Mammary epithelial cell (primary cell): ENCODE measurements at regions of chr5 and their contacts with region 1.

Region 1: GRCh38 chr5:44774279-44774880 is 34.4 kb upstream of the MRPS30 start:
- DNase-seq: peak; percentile 27
- H3K4me3 ChIP-seq: no peak overlapping the region
- H3K27ac ChIP-seq: no peak overlapping the region
- H3K4me1 ChIP-seq: no peaks in the 10 kb centered on the region
- H3K27me3 ChIP-seq: no peaks in the 10 kb centered on the region
- CTCF ChIP-seq: peak; percentile 32 to 58

Region 2: DNA sequence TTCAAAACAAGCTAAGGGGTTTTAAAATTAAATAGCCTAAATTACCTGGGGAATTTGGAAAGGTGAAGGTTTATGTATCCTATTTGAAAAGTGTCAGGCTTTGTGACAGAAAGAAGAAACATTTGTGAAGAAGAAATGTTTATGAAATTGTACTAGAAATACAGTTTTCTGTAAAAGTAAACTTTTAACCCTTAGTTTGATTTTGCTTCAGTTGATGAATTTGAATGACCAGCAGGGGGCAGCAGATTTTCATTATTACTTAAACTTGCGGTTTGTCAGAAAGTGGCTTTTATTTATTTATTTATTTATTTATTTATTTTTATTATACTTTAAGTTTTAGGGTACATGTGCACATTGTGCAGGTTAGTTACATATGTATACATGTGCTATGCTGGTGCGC is 1113.3 kb before region 1 on chr5:
- CTCF ChIA-PET with region 1: no interaction called
- dilution Hi-C with region 1: no loop called
- in situ Hi-C with region 1: no loop called
- intact Hi-C with region 1: loop called (anchors 10 kb)
- DNase-seq: peak; percentile 5
- H3K4me3 ChIP-seq: no peak overlapping the region
- H3K27ac ChIP-seq: no peak overlapping the region
- H3K4me1 ChIP-seq: peaks cover 4% of the 10 kb centered on the region
- H3K27me3 ChIP-seq: no peaks in the 10 kb centered on the region
- CTCF ChIP-seq: peak; percentile 41 to 43

Region 3: GRCh38 chr5:44622331-44622730 is 152.0 kb before region 1 on chr5:
- CTCF ChIA-PET with region 1: no interaction called
- dilution Hi-C with region 1: no loop called
- in situ Hi-C with region 1: no loop called
- intact Hi-C with region 1: no loop called
- DNase-seq: no peak
- H3K4me3 ChIP-seq: no peak overlapping the region
- H3K27ac ChIP-seq: no peak overlapping the region
- H3K4me1 ChIP-seq: peaks cover 7% of the 10 kb centered on the region
- H3K27me3 ChIP-seq: no peaks in the 10 kb centered on the region
- CTCF ChIP-seq: no peak

Region 4: GRCh38 chr5:44727100-44727499 is 47.3 kb before region 1 on chr5:
- CTCF ChIA-PET with region 1: no interaction called
- dilution Hi-C with region 1: no loop called
- in situ Hi-C with region 1: no loop called
- intact Hi-C with region 1: no loop called
- DNase-seq: no peak
- H3K4me3 ChIP-seq: no peak overlapping the region
- H3K27ac ChIP-seq: no peak overlapping the region
- H3K4me1 ChIP-seq: no peaks in the 10 kb centered on the region
- H3K27me3 ChIP-seq: no peaks in the 10 kb centered on the region
- CTCF ChIP-seq: no peak

Region 5: DNA sequence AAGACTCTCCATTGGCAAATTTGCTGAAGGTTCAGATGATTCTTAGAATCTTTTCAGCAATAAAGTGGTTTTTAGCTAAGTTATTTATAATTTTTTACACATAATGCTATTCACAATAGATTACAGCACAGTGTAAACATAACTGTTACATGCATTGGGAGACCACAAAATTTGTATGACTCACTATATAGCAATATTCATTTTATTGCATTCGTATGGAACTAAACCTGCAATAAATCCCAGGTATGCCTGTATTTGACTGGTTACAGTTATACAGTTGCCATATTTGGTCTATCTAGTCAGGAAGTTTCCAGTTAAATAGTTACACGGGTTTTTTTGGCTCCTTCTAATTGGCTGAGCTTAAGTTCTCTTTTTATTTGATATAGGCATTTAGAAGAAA is 255.2 kb after region 1 on chr5:
- CTCF ChIA-PET with region 1: no interaction called
- dilution Hi-C with region 1: no loop called
- in situ Hi-C with region 1: no loop called
- intact Hi-C with region 1: no loop called
- DNase-seq: no peak
- H3K4me3 ChIP-seq: no peak overlapping the region
- H3K27ac ChIP-seq: no peak overlapping the region
- H3K4me1 ChIP-seq: no peaks in the 10 kb centered on the region
- H3K27me3 ChIP-seq: no peaks in the 10 kb centered on the region
- CTCF ChIP-seq: no peak